ENCODE measurements at regions of chr12 and their contacts with region 1.

Region 1: DNA sequence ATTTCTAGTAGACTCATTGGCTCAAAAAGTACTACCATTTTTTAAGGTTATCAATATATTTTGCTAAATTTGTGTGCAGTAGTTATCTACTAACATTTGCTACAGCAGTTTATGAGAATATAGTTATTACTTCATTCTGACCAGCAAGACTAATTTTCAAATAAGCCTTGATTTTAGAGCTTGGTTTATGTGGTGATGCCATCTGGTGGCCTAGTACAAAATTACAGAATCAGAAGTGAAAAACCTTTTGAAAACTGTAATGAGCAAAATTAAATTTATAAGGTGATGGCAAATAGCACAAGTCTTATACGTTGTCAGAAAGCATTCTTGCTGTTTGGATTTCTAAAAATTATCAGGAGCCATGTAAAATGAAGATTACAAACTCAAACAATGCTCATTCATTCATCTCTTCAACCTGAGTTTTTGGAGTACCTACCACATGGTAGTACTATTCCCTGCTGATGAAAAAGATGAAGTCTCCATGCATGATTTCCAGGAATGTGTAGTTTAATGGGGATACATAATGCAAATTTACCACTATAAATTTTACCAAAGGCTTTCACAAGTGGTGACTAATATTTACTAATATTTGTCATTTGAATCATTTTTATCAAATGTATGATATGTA is 51.0 kb downstream of the MAGOHB start:
- DNase-seq: no peak
- H3K4me3 ChIP-seq: no peak overlapping the region
- H3K27ac ChIP-seq: no peak overlapping the region
- H3K4me1 ChIP-seq: no peaks in the 10 kb centered on the region
- H3K27me3 ChIP-seq: no peaks in the 10 kb centered on the region
- CTCF ChIP-seq: peak; percentile 48 to 68 (median 52)

Region 2: DNA sequence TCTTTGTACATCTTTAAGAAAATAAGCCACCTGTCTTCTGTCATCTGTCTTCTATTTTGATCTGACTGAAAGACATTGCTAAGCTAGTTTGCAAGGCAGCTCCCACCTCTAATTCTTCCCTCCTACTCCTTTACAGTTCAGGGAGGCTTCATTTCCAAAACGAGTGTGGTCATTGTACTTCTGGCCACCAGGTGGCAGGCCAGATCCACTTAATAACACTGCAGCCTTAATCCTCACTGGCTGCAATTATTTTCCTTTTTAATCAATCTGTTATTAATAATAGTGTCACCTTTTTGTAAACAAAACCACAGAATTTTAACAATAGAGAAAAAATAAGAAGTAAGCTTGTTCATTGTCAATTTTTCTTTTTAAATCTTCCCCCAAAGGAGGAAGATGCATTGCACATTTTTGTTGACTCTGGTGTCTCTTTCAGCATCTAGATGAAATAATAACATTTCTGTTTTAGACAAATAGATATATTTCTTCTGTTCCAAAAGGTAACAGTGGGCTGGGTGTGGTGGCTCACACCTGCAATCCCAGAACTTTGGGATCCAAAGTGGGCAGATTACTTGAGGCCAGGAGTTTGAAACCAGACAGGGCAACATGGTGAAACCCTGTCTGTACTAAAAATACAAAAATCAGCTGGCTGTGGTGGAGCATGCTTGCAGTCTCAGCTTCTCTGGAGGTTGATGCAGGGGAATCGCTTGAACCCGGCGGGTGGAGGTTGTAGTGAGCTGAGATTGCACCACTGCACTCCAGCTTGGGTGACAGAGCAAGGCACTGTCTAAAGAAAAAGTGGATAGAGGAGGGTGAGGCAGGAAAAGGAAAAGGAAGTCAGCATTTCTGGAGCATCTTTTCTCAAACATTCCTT is 326.4 kb before region 1 on chr12:
- intact Hi-C with region 1: loop called (anchors 1 kb)
- DNase-seq: no peak
- H3K4me3 ChIP-seq: no peak overlapping the region
- H3K27ac ChIP-seq: no peak overlapping the region
- H3K4me1 ChIP-seq: no peaks in the 10 kb centered on the region
- H3K27me3 ChIP-seq: no peaks in the 10 kb centered on the region
- CTCF ChIP-seq: peak; percentile 75 to 91 (median 85)

Region 3: DNA sequence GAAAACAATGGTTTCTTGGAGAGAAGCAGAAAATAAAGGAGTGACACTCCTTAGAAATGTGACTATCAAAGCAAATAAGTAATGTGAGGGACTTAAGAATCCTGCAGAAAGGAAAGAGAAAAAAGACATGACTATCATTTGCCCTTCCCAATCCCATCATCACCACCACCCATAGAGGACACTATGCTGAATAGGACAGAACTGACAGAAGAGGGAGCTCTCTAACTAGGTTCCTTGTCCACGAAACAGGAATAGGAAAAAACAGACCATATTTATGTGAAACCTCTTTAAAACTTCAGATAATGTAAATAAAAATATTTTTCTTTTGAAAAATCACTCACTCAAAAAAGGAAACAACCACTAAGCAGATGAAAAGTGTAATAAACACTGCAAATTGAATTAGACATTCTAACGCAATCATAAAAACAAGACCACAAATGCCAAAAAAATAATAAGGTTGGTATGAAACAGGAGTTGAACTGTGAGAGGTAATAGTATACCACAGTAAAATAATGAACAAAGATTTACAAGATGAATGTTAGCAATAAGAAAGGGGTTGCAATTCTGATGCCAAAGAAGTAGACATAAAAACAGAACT is 230.7 kb before region 1 on chr12:
- intact Hi-C with region 1: loop called (anchors 1 kb)
- DNase-seq: no peak
- H3K4me3 ChIP-seq: no peak overlapping the region
- H3K27ac ChIP-seq: no peak overlapping the region
- H3K4me1 ChIP-seq: no peaks in the 10 kb centered on the region
- H3K27me3 ChIP-seq: no peaks in the 10 kb centered on the region
- CTCF ChIP-seq: peak; percentile 38 to 68 (median 51)

Region 4: GRCh38 chr12:10540776-10541205 is 21.6 kb before region 1 on chr12:
- intact Hi-C with region 1: no loop called
- DNase-seq: no peak
- H3K4me3 ChIP-seq: no peak overlapping the region
- H3K27ac ChIP-seq: no peak overlapping the region
- H3K4me1 ChIP-seq: no peaks in the 10 kb centered on the region
- H3K27me3 ChIP-seq: no peaks in the 10 kb centered on the region
- CTCF ChIP-seq: no peak